Heart right ventricle (tissue), 16 donors: ENCODE measurements at regions of chr1 and their contacts with region 1.

Region 1: GRCh38 chr1:25796811-25797458 is 3.1 kb upstream of the SELENON start:
- DNase-seq: peak; percentile 89 to 90
- ATAC-seq: peak in 7 of 8 donors; percentile 16 to 48 (median 38)
- H3K4me3 ChIP-seq: no peak overlapping the region
- H3K27ac ChIP-seq: peak overlapping the region in 7 of 10 donors; percentile 27 to 58 (median 43)
- H3K4me1 ChIP-seq: peaks cover 19 to 62% (median 39%) of the 10 kb centered on the region in 9 donors
- H3K27me3 ChIP-seq: no peaks in the 10 kb centered on the region
- CTCF ChIP-seq: peak; percentile 69 to 81 (median 76)

Region 2: GRCh38 chr1:25503551-25504426 is 293.1 kb before region 1 on chr1:
- intact Hi-C with region 1: loop called in 1 of 10 experiments (anchors 5 kb)
- DNase-seq: peak; percentile 53 to 58
- ATAC-seq: peak in 7 of 8 donors; percentile 60 to 87 (median 84)
- H3K4me3 ChIP-seq: no peak overlapping the region
- H3K27ac ChIP-seq: no peak overlapping the region
- H3K4me1 ChIP-seq: peaks cover 0 to 35% (median 7%) of the 10 kb centered on the region in 9 donors
- H3K27me3 ChIP-seq: no peaks in the 10 kb centered on the region
- CTCF ChIP-seq: peak; percentile 26 to 68 (median 54)

Region 3: GRCh38 chr1:25520446-25521061 is 276.4 kb before region 1 on chr1:
- intact Hi-C with region 1: loop called in 1 of 10 experiments (anchors 10 kb)
- DNase-seq: peak; percentile 44 to 62
- ATAC-seq: peak in 2 of 8 donors; percentile 37 to 51
- H3K4me3 ChIP-seq: no peak overlapping the region
- H3K27ac ChIP-seq: no peak overlapping the region
- H3K4me1 ChIP-seq: peaks cover 0 to 6% (median 0%) of the 10 kb centered on the region in 9 donors
- H3K27me3 ChIP-seq: peaks cover 0 to 3% (median 0%) of the 10 kb centered on the region in 7 donors
- CTCF ChIP-seq: peak; percentile 66 to 90 (median 84)

Region 4: DNA sequence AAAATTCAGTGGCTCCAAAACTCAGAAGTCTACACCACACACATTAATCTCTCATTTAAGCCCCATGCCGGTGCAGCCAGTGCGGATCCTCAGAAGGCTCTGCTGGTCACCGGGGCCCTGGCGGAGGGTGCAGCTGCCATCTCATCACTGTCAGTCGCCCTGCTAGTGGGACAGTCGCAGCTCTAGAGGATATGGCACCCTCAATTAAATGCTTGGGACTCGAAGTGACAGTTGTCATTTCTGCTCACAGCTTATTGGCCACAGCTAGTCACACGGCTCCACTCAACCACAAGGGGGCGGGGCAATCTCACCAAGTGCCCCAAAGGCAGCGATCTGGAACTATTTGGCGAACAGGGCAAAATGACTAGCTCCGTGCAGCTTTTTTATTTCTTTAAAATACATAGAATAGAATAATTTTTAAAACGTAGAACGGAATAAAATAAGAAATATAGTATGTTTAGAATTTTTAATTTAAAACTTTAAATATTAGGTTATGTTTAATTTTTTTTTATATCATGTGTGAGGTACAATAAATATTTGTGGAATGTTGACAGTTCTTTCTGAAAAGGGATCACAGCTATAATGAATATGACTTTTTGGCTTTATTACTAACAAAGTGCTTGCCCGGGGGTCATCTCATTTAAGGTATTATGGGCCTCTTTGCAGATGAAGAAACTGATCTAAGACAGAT is 188.3 kb before region 1 on chr1:
- intact Hi-C with region 1: loop called (anchors 2 to 5 kb)
- DNase-seq: peak; percentile 86 to 90
- ATAC-seq: peak; percentile 67 to 95 (median 92)
- H3K4me3 ChIP-seq: peak overlapping the region in 6 of 10 donors; percentile 19 to 44 (median 30)
- H3K27ac ChIP-seq: no peak overlapping the region
- H3K4me1 ChIP-seq: peaks cover 0 to 9% (median 6%) of the 10 kb centered on the region in 9 donors
- H3K27me3 ChIP-seq: peaks cover 0 to 14% (median 0%) of the 10 kb centered on the region in 7 donors
- CTCF ChIP-seq: peak; percentile 51 to 89 (median 79)

Region 5: DNA sequence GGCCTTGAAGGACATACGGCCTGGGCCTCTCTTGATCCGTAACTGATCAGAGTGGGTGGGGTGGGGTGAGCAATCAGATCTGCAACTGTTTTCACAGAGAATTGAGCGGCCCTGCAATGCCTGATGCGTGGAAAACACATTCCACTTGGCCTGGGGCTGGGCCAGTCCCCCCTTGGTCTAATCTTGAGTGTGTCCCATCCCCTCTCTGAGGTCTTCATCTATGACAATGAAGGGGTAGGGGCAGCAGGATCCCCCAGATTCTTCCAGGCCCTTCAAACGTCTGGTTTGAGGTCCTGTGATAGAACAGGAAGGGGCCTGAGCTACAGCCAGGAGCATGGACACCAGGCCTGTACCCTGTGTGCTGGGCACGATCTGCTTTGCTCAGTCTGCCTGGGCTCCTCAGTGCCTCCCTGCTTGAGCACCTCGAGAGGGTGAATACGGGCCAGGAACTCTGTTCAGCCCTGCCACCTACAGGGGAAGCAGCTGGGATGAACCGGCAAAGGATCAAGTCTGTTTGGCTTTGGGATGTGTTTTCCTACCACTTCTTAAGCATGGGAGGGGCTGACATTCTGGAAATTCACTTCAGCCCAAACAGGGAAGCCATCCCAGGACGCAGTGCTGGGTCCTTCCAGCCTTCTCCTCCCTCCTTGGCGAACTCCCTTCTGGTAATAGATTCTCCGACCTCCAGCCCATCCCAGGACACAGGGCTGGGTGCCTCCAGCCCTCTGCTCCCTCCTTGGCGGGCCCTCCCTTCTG is 52.9 kb before region 1 on chr1:
- intact Hi-C with region 1: loop called in 4 of 10 experiments (anchors 5 to 10 kb)
- DNase-seq: peak; percentile 68 to 78
- ATAC-seq: peak; percentile 71 to 91 (median 88)
- H3K4me3 ChIP-seq: peak overlapping the region in 2 of 10 donors; percentile 4 to 11
- H3K27ac ChIP-seq: peak overlapping the region; percentile 69 to 95 (median 90)
- H3K4me1 ChIP-seq: peaks cover 12 to 47% (median 33%) of the 10 kb centered on the region in 9 donors
- H3K27me3 ChIP-seq: no peaks in the 10 kb centered on the region
- CTCF ChIP-seq: peak; percentile 9 to 74 (median 49)